Ovary (tissue), 10 donors: ENCODE measurements at regions of chrX and their contacts with region 1.

Region 1: GRCh38 chrX:106774317-106774716 is 28.2 kb upstream of the TBC1D8B start:
- DNase-seq: no peak
- H3K4me3 ChIP-seq: no peak overlapping the region
- H3K27ac ChIP-seq: no peak overlapping the region
- H3K4me1 ChIP-seq: no peaks in the 10 kb centered on the region
- H3K27me3 ChIP-seq: no peaks in the 10 kb centered on the region
- CTCF ChIP-seq: no peak
- EP300 ChIP-seq: no peak
- POLR2A ChIP-seq: no peak

Region 2: GRCh38 chrX:105190252-105190853 is 1584.0 kb before region 1 on chrX:
- intact Hi-C with region 1: loop called in 1 of 4 experiments (anchors 10 kb)
- DNase-seq: no peak
- H3K4me3 ChIP-seq: no peak overlapping the region
- H3K27ac ChIP-seq: no peak overlapping the region
- H3K4me1 ChIP-seq: no peaks in the 10 kb centered on the region
- H3K27me3 ChIP-seq: no peaks in the 10 kb centered on the region
- CTCF ChIP-seq: peak; percentile 31 to 44 (median 42)
- EP300 ChIP-seq: no peak
- POLR2A ChIP-seq: no peak